ENCODE measurements at regions of chr9 and their contacts with region 1.

Region 1: DNA sequence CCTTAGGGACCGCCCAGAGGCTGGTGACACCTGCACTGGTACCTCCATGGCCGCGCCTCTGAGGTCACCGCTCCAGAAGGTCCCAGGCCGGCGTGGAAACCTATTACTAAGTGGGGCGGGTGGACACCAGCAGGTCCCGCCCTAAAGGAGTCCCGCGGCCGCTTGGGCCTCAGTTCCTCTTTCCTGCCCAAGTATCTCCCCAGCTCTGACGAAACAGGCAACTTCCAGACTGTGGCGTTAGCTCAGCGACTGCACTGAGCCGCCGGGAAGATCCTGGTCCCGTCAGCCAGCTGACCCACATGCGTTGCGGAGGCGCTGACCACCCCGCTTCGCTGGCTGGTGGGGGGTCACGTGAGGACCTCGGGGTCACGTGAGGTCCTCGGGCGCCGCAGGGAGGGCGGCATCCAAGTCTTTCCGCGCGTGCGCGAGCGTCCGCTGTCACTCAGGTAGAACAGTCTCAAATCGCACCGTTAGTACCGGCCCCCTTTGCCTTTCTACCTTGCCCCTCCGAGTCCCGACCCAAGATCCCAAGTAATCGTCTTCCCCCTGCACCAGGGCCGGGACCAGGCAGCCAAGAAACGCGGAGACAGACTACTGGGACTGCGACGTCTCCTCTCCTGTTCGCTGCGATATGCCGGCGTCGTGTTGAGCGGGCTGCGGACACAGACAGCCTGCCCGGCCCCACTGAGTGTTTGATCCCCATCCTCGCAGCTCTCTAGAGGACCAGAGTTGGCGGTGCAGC is 53.7 kb upstream of the KDM4C start:
- DNase-seq: peak; percentile 87 to 93
- ATAC-seq: peak; percentile 96 to 99 (median 97)
- H3K4me3 ChIP-seq: peak overlapping the region; percentile 81
- H3K27ac ChIP-seq: peak overlapping the region; percentile 85
- H3K4me1 ChIP-seq: peaks cover 4% of the 10 kb centered on the region
- H3K27me3 ChIP-seq: no peaks in the 10 kb centered on the region
- CTCF ChIP-seq: no peak

Region 2: DNA sequence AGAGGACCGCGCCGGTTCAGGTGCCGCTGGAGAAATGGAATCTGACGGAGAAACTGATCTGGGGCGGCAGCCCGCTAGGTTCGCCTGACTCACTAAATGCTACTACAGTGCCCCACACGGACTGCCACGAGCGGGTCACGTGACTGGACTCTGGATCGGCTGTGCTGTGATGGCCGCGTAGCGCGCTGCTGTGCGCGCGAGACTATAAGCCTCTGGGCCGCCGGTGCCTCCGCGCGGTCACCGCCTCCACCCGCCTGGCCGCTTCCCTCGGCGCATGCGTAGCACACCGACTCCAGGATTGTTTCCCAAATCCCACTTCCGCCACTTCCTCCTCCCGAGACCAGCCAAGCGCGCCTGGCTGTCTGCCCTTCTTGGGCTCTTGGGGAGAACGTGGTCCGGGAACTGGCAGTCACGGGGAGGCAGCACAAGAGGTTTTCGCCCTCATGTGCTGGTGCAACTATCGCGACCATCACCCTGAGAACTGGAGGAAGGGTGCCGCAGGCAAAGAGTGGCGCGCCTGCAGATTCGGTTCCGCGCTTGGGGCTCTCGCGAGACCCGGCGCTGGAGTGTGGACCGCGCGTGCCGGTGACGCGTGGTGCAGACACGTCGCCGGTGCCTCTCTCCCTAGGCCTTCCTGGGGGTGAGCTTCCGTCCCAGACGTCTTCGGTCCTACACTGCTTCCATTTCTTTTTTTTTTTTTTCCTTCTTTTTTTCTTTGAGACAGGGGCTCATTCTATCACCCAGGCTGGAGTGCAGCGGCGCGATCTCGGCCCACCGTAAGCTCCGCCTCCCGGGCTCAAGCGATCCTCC is 22.7 kb before region 1 on chr9:
- intact Hi-C with region 1: loop called in 1 of 2 experiments (anchors 2 kb)
- DNase-seq: peak; percentile 98
- ATAC-seq: peak; percentile 97 to 98 (median 98)
- H3K4me3 ChIP-seq: peak overlapping the region; percentile 75
- H3K27ac ChIP-seq: peak overlapping the region; percentile 92
- H3K4me1 ChIP-seq: peaks cover 10% of the 10 kb centered on the region
- H3K27me3 ChIP-seq: no peaks in the 10 kb centered on the region
- CTCF ChIP-seq: no peak

Region 3: GRCh38 chr9:6757456-6758247 is 53.6 kb after region 1 on chr9 and contains the start of gene KDM4C:
- intact Hi-C with region 1: loop called in 1 of 2 experiments (anchors 10 kb)
- DNase-seq: peak; percentile 96 to 98
- ATAC-seq: peak; percentile 93 to 94 (median 93)
- H3K4me3 ChIP-seq: peak within 1 kb of the TSS; percentile 98
- H3K27ac ChIP-seq: peak within 1 kb of the TSS; percentile 100
- H3K4me1 ChIP-seq: peaks cover 18% of the 10 kb centered on the region
- H3K27me3 ChIP-seq: no peaks in the 10 kb centered on the region
- CTCF ChIP-seq: no peak
- total RNA-seq, gene KDM4C: 10.1 to 13.0 (median 12.1) TPM